CD14-positive monocyte (primary cell): ENCODE measurements at regions of chr1 and their contacts with region 1.

Region 1: DNA sequence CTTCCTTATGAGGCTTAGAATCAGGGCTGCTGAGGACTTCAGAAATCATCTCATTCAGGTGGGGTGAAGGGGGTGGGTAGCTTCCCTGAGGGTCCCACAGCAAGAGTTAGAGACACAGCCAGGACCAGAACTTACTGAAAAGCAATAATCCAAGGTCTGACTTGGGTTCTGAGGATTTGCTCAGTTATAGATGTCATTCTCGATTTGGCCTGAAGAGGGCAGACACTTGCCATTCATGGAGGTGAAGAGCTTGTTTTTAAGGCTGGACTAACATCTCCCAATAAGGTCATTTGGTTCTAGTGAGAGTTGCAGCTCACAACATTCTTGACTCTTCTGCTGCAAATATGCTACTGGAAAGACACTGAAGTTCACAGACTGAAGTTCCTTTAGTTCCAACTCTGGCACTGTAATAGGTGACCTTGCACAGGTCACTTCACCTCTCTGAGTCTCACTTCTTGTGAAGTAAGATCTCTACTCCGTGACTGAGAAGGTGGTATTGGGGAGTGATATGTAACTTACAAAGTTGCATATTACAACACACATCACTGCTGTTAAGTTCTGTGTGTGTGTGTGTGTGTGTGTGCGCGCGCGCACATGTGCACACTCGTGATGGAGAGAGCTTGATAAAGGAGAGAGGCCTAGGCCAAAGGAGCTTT is 69.8 kb upstream of the DIRAS3 start:
- DNase-seq: peak; percentile 37 to 54 (median 53)
- H3K4me3 ChIP-seq: no peak overlapping the region
- H3K4me3 Mint-ChIP-seq: no peak overlapping the region
- H3K27ac ChIP-seq: no peak overlapping the region
- H3K27ac Mint-ChIP-seq: no peak overlapping the region
- H3K4me1 ChIP-seq: peaks cover 0 to 4% of the 10 kb centered on the region in 2 donors
- H3K4me1 Mint-ChIP-seq: peaks cover 6% of the 10 kb centered on the region
- H3K27me3 ChIP-seq: no peaks in the 10 kb centered on the region
- H3K27me3 Mint-ChIP-seq: peaks cover 0 to 4% (median 0%) of the 10 kb centered on the region in 3 donors
- CTCF ChIP-seq: peak; percentile 89

Region 2: DNA sequence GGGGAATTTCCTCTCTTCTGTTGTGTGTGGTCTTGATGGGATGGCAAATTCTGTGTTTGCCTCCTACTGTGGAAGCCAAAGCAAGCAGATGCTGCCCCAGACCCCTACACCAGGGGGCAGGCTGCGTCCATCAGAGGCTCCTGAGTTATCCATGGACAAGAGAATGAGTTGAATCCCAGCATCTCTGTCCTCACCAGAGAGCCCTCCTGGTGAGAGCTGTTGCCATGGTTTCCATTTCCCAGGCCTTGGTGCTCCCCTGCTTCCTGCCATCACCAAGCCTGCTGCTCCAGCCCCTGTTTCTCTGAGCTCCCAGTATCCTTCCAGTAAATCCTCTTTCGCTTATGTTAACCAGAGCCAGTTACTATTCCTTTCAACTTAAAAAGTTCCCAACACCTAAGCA is 266.6 kb before region 1 on chr1:
- intact Hi-C with region 1: loop called in 1 of 2 experiments (anchors 10 kb)
- DNase-seq: no peak
- H3K4me3 ChIP-seq: no peak overlapping the region
- H3K4me3 Mint-ChIP-seq: no peak overlapping the region
- H3K27ac ChIP-seq: no peak overlapping the region
- H3K27ac Mint-ChIP-seq: no peak overlapping the region
- H3K4me1 ChIP-seq: no peaks in the 10 kb centered on the region
- H3K4me1 Mint-ChIP-seq: peaks cover 4% of the 10 kb centered on the region
- H3K27me3 ChIP-seq: no peaks in the 10 kb centered on the region
- H3K27me3 Mint-ChIP-seq: peaks cover 3 to 6% (median 4%) of the 10 kb centered on the region in 3 donors
- CTCF ChIP-seq: peak; percentile 57

Region 3: GRCh38 chr1:68442822-68443556 is 322.7 kb after region 1 on chr1:
- intact Hi-C with region 1: loop called (anchors 2 to 5 kb)
- DNase-seq: peak; percentile 30 to 71 (median 61)
- H3K4me3 ChIP-seq: no peak overlapping the region
- H3K4me3 Mint-ChIP-seq: peak overlapping the region in 1 of 2 donors; percentile 59
- H3K27ac ChIP-seq: no peak overlapping the region
- H3K27ac Mint-ChIP-seq: no peak overlapping the region
- H3K4me1 ChIP-seq: peaks cover 9 to 16% of the 10 kb centered on the region in 2 donors
- H3K4me1 Mint-ChIP-seq: peaks cover 16% of the 10 kb centered on the region
- H3K27me3 ChIP-seq: no peaks in the 10 kb centered on the region
- H3K27me3 Mint-ChIP-seq: peaks cover 0 to 2% (median 2%) of the 10 kb centered on the region in 3 donors
- CTCF ChIP-seq: peak; percentile 88

Region 4: GRCh38 chr1:68449901-68450300 is 329.6 kb after region 1 on chr1 and contains the start of gene RPE65:
- intact Hi-C with region 1: loop called in 1 of 2 experiments (anchors 5 kb)
- DNase-seq: no peak
- H3K4me3 ChIP-seq: peak within 1 kb of the TSS in 1 of 3 experiments; percentile 6
- H3K4me3 Mint-ChIP-seq: no peak within 1 kb of the TSS
- H3K27ac ChIP-seq: peak within 1 kb of the TSS in 1 of 2 donors; percentile 27
- H3K27ac Mint-ChIP-seq: peak within 1 kb of the TSS in 5 of 7 donors; percentile 2 to 77 (median 18)
- H3K4me1 ChIP-seq: peaks cover 15 to 16% of the 10 kb centered on the region in 2 donors
- H3K4me1 Mint-ChIP-seq: peaks cover 22% of the 10 kb centered on the region
- H3K27me3 ChIP-seq: no peaks in the 10 kb centered on the region
- H3K27me3 Mint-ChIP-seq: no peaks in the 10 kb centered on the region
- CTCF ChIP-seq: no peak
- polyA plus RNA-seq, gene RPE65: not detected